HEK293T (cell line): ENCODE measurements at regions of chr4 and their contacts with region 1.

Region 1: GRCh38 chr4:153466081-153466948 is at the start of gene TMEM131L:
- DNase-seq: peak; percentile 85

Region 2: GRCh38 chr4:153344131-153345010 is 121.9 kb before region 1 on chr4 and contains the start of gene MND1:
- CTCF ChIA-PET with region 1: no interaction called
- POLR2A ChIA-PET with region 1: interaction called, 14 read pairs
- DNase-seq: peak; percentile 91

Region 3: GRCh38 chr4:153479101-153479500 is 12.8 kb after region 1 on chr4:
- CTCF ChIA-PET with region 1: interaction called, 3 read pairs
- POLR2A ChIA-PET with region 1: interaction called, 38 read pairs
- DNase-seq: no peak

Region 4: DNA sequence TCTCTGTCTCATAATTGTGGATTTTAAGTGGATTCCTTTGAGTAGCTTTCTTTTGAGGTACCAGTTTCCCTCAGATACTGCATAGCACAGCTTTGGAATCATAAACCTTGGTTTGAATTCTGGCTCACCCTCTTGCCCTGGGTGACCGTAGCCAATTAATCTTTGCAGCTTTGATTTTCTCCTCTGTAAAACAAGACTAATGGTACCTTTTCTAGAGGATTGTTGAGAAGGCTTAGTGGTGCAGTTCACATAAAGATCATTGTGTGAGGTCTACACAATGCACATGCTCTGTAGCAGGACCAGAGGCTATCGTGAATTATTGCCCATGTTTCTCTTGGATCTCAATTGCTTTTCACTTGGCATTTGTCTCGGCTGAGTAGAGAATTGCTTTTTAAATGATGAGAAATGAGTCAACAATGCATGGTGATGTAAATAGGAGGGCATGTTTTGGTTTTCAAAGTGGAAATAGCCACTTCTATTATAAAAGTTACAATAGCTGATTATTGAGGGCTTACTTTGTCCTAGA is 47.7 kb after region 1 on chr4:
- CTCF ChIA-PET with region 1: no interaction called
- POLR2A ChIA-PET with region 1: interaction called, 16 read pairs
- DNase-seq: no peak

Region 5: DNA sequence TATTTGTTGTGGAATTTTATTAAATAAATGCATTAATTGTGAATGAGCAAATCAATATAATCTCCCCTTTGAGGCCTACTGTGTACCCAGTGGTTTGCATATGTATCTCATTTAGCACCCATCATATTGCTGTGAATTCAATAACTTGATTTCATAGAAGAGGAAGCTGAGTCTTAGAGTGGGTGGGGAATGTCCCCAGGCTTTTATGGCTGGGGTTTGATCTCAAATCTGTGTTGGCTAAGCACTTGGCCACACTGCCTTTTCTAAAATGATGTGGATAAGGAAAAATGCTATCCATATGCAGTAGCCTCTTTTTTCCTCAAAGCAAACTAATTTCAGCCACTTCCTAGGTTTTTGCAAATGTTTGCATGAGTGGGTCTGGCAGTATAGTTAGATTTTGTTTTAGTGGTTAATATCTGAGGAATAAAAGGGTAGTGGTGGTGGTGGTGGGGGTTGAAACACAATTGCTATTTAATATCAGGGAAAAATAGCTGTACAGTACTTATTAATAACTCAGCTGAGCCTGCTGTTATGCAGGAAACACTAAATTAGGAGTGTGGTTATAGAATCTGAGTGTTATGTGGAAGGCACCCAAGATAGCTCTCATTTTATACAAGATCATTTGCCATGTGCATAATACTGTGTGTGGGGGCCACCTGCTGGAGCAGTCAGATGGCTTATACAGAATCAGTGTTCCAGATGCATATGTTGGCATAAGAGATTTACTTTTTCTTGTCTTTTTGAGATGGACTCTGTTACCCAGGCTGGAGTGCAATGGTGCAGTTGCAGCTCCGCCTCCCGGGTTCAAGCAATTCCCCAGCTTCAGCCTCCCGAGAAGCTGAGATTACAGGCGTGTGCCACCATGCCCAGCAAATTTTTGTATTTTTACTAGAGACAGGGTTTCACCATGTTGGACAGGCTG is 107.8 kb after region 1 on chr4:
- CTCF ChIA-PET with region 1: interaction called, 8 read pairs
- POLR2A ChIA-PET with region 1: interaction called, 20 read pairs
- DNase-seq: peak; percentile 23